ENCODE measurements at regions of chr2 and their contacts with region 1.

Region 1: DNA sequence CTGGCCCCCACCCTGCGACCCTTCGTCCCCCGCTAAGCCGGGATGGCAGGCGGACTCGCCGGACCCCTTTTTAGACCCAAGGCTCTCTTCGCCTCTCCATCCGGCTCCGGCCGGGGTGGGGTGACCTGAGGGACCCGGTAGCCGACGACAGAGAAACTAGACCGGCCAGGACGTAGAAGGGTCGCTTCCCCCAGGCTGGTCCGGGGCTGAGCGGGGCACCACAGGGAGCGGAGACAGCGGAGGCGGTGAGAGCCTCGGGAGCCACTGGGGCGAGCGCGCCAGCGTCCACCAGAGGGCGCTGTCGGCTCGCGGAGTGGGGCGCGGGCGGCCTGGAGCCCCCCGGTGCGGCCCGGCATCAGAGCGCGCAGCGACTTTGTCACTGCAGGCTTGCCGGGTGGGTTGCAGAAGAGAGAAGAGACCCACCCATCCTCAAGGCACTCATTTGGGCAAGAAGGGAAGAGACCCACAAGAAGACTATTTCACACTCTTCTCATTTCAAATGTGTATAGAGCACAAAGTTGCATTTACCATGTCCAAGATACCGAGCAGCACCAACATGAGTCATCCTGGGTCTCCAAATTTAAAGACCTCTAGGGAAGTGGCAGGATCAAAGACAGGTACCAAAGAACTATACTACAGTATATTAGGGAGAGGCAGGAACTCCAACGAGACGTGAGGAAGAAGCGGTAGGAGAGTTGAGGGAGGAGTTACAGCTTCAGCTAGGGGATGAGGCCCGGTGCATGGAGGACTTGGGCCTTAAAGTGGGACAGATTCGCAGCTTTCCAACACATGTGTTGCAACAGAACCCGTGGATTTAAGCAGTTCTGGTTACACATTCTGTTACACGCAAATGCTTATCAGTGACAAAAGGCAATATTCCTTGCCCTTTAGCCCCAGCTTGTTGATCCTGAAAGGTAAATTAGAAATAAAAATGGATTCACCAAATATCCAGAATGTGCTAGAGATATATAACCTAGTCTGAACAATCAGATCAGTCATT is 7.6 kb upstream of the PRKCE start:
- DNase-seq: peak in 2 of 3 donors; percentile 67 to 70
- H3K4me3 ChIP-seq: peak overlapping the region; percentile 37 to 84 (median 65)
- H3K27ac ChIP-seq: no peak overlapping the region
- H3K4me1 ChIP-seq: peaks cover 0 to 13% (median 6%) of the 10 kb centered on the region in 4 experiments
- H3K27me3 ChIP-seq: peaks cover 0 to 10% (median 6%) of the 10 kb centered on the region in 5 experiments

Region 2: GRCh38 chr2:45598545-45598944 is 45.3 kb before region 1 on chr2:
- CTCF ChIA-PET with region 1: no interaction called
- POLR2A ChIA-PET with region 1: interaction called, 11 read pairs
- DNase-seq: no peak
- H3K4me3 ChIP-seq: no peak overlapping the region
- H3K27ac ChIP-seq: no peak overlapping the region
- H3K4me1 ChIP-seq: no peaks in the 10 kb centered on the region
- H3K27me3 ChIP-seq: no peaks in the 10 kb centered on the region

Region 3: DNA sequence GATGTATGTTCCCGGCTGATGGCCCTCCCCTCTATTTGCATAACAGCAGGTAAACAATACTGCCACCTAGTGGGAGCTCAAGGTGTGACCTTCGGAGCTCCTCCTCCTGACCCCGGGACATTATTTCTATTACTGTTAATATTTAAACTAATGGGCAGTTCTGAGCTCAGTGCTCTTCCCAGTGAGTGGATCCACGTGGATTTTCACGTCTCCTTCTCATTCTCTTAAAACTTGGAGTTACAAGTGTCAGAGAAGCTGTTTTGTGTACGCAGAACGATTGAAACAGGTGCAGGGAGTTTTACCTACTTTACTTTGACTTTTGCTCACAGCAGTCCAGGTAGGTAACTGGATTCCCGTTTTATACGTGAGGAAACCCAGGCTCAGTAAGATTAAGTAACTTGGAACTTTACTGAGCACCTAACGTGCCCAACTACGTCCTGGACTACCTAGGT is 134.9 kb after region 1 on chr2:
- CTCF ChIA-PET with region 1: interaction called, 52 read pairs
- POLR2A ChIA-PET with region 1: interaction called, 3 read pairs
- DNase-seq: peak; percentile 81 to 86 (median 82)
- H3K4me3 ChIP-seq: peak overlapping the region in 4 of 7 experiments; percentile 37 to 73 (median 45)
- H3K27ac ChIP-seq: no peak overlapping the region
- H3K4me1 ChIP-seq: peaks cover 0 to 19% (median 11%) of the 10 kb centered on the region in 4 experiments
- H3K27me3 ChIP-seq: no peaks in the 10 kb centered on the region